ENCODE measurements at regions of chr14 and their contacts with region 1.

Region 1: GRCh38 chr14:54920052-54920451 is 17.4 kb upstream of the GCH1 start:
- DNase-seq: no peak
- H3K4me3 ChIP-seq: no peak overlapping the region
- H3K27ac ChIP-seq: no peak overlapping the region
- H3K4me1 ChIP-seq: no peaks in the 10 kb centered on the region
- H3K27me3 ChIP-seq: no peaks in the 10 kb centered on the region
- CTCF ChIP-seq: no peak
- EP300 ChIP-seq: no peak
- POLR2A ChIP-seq: no peak
- RAD21 ChIP-seq: no peak

Region 2: GRCh38 chr14:54902521-54903420 is 17.3 kb before region 1 on chr14 and contains the start of gene GCH1:
- CTCF ChIA-PET with region 1: interaction called, 5 read pairs
- POLR2A ChIA-PET with region 1: interaction called, 11 read pairs
- DNase-seq: peak; percentile 25 to 91
- H3K4me3 ChIP-seq: peak within 1 kb of the TSS; percentile 68 to 86 (median 72)
- H3K27ac ChIP-seq: no peak within 1 kb of the TSS
- H3K4me1 ChIP-seq: peaks cover 0 to 5% (median 1%) of the 10 kb centered on the region in 4 experiments; a peak in 6 of 7 replicates
- H3K27me3 ChIP-seq: peaks cover 2 to 20% (median 17%) of the 10 kb centered on the region in 4 experiments
- CTCF ChIP-seq: peak in 2 of 3 experiments; percentile 26 to 44; a peak in 2 of 4 replicates
- EP300 ChIP-seq: no peak
- POLR2A ChIP-seq: peak; percentile 96 to 97
- RAD21 ChIP-seq: peak in 1 of 2 experiments; percentile 15; a peak in 1 of 4 replicates
- total RNA-seq, gene GCH1: 7.9 and 8.1 TPM in 2 replicates

Region 3: GRCh38 chr14:55071870-55072640 is 152.0 kb after region 1 on chr14:
- CTCF ChIA-PET with region 1: no interaction called
- POLR2A ChIA-PET with region 1: no interaction called
- DNase-seq: no peak
- H3K4me3 ChIP-seq: no peak overlapping the region
- H3K27ac ChIP-seq: no peak overlapping the region
- H3K4me1 ChIP-seq: peaks cover 0 to 4% (median 1%) of the 10 kb centered on the region in 4 experiments; a peak in 4 of 7 replicates
- H3K27me3 ChIP-seq: peaks cover 0 to 1% (median 0%) of the 10 kb centered on the region in 4 experiments; a peak in 1 of 7 replicates
- CTCF ChIP-seq: no peak
- EP300 ChIP-seq: no peak
- POLR2A ChIP-seq: no peak
- RAD21 ChIP-seq: no peak

Measured in H1 (cell line).